Transverse colon (tissue), 4 donors: ENCODE measurements at regions of chr5 and their contacts with region 1.

Region 1: DNA sequence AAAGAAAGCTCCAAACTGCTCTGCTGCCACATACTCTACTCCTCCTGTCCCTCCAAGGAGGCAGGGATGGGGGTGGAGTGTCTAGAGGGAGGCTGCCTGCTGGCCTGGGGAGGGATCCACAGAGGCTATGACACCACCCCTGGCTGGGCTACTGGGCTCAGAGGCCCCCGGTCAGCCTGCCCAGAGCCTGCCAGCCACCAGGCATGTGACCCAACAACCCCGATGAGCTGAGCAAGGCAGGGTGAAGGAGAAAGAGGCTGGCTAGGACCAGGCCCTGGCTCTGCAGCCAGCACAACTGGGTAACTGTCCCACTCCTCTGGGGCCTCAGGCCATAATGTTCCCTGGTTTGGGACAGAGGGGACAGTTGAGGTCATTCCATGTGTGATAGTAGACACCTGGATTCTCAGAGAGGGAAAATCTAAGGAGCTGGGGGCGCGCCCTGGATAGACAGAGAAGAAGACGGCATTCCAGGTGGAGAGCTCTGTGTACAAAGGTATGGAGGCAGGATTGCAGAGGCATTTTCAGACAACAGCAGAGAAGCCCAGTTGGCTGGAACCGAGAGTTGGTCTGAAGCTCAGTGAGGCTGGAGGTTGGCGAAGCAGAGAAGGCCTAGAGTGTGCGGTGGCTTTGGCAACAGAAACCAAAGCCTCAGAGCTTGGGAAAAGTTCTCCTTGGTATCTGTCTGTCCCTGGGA is 33.8 kb upstream of the IL17B start:
- DNase-seq: no peak
- H3K4me3 ChIP-seq: peak overlapping the region; percentile 22 to 53 (median 50)
- H3K27ac ChIP-seq: peak overlapping the region; percentile 82 to 97 (median 93)
- H3K4me1 ChIP-seq: peaks cover 2 to 40% (median 9%) of the 10 kb centered on the region in 4 donors
- H3K27me3 ChIP-seq: no peaks in the 10 kb centered on the region
- CTCF ChIP-seq: no peak
- EP300 ChIP-seq: peak; percentile 17
- POLR2A ChIP-seq: peak; percentile 9

Region 2: DNA sequence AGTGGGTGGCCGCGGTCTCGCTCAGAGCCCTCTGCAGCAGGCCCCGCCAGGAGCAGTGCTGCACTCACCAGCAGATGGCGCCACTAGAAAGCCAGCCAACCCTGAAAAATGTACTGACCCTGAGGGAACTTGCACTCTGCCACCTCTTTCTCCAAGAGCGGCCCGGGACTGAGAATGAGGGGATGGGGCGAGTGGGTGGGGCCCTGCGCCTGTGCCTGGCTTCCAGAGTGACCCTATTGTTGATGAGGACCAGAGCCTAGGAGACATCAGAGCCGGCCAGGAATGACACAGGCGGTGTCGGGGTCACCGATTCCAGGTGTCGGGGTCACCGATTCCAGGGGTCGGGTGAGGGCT is 31.0 kb before region 1 on chr5:
- in situ Hi-C with region 1: no loop called
- intact Hi-C with region 1: loop called (anchors 2 kb)
- DNase-seq: peak; percentile 83
- H3K4me3 ChIP-seq: peak overlapping the region in 2 of 4 donors; percentile 8 to 27
- H3K27ac ChIP-seq: peak overlapping the region; percentile 87 to 91 (median 88)
- H3K4me1 ChIP-seq: peaks cover 4 to 44% (median 22%) of the 10 kb centered on the region in 4 donors
- H3K27me3 ChIP-seq: no peaks in the 10 kb centered on the region
- CTCF ChIP-seq: peak; percentile 90 to 96 (median 94)
- EP300 ChIP-seq: no peak
- POLR2A ChIP-seq: no peak